Dorsolateral prefrontal cortex (tissue), 120 donors: ENCODE measurements at regions of chr14 and their contacts with region 1.

Region 1: DNA sequence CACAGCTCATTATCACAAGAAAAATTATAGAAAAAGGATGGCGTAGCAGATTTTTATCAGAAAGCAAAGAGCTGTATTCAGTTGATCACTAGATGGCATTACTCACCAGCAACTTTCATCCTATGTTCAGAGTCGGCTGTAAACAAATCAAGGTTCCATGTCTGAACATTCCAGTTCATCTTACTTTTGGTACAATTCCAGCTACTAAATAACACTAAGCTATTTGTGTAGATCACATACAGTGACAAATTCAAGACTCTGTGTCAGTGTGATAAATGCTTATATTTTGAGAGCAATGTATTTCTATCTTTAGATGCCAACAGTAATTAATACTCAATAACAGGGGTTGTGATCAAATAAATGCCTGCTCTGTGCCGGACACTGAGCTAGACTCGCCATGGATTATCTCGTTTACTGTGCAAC is 30.1 kb downstream of the NRDE2 start:
- DNase-seq: no peak
- H3K4me3 ChIP-seq: peak overlapping the region in 13 of 59 donors; percentile 0 to 33 (median 11)
- H3K27ac ChIP-seq: peak overlapping the region; percentile 38 to 99 (median 92)
- H3K27me3 ChIP-seq: no peaks in the 10 kb centered on the region
- CTCF ChIP-seq: peak in 54 of 56 donors; percentile 55 to 88 (median 77)

Region 2: DNA sequence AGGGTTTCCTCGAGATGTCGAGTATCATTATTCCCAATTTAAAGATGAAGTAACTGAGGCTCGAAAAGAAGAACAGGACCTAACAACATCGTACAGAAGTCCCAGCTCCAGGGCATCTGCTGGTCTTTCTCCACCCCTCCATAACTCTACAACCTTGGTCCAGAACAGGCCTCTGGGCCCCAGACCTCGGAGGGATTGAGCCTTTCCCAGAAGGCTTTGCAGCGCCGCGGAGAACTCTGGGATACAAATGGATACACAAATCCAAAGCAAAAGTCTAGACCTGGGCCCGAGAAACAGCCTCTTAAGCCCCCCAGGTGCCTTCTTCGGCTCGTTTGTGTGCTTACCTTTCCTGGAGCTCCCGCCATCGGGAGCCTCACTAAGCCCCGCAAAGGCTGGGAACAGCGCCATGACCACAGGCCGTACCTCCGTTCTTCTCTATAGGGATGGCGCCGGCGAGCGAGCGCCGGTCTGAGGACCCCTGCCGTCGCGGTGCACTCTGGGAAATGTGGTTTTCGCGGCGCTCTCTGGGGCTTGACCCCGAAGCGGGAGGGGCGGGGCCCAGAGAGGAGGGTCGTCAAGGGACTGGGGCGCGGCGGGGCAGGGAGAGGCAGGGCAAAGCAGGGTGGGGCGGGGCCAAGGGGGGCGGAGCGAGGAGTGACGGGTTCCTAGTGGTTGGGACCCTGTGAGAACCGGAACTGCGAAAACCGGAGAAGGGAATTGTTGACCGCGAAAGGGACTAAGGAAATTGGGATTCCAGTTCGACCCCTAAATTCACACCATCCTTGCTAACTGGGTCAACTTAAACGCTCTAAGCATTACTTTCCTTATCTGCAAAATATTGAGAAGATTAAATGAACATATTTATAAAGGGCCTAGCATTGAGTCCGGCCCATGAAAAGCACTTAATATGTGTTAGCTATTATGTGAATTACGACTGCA is 30.1 kb after region 1 on chr14 and contains the start of gene NRDE2:
- intact Hi-C with region 1: loop called in 1 of 2 experiments (anchors 1 kb)
- DNase-seq: peak; percentile 97 to 99 (median 97)
- H3K4me3 ChIP-seq: peak within 1 kb of the TSS; percentile 61 to 99 (median 80)
- H3K27ac ChIP-seq: peak within 1 kb of the TSS; percentile 76 to 97 (median 91)
- H3K27me3 ChIP-seq: no peaks in the 10 kb centered on the region
- CTCF ChIP-seq: peak in 38 of 56 donors; percentile 6 to 58 (median 32)
- total RNA-seq, gene NRDE2: 16.4 to 42.6 (median 27.7) TPM

Region 3: GRCh38 chr14:90383075-90383730 is 81.5 kb after region 1 on chr14:
- intact Hi-C with region 1: loop called (anchors 1 to 5 kb)
- DNase-seq: peak; percentile 99 to 100 (median 100)
- H3K4me3 ChIP-seq: peak overlapping the region; percentile 48 to 85 (median 71)
- H3K27ac ChIP-seq: peak overlapping the region; percentile 98 to 100 (median 100)
- H3K27me3 ChIP-seq: no peaks in the 10 kb centered on the region
- CTCF ChIP-seq: peak in 53 of 56 donors; percentile 2 to 64 (median 37)

Region 4: GRCh38 chr14:90518941-90519256 is 217.2 kb after region 1 on chr14:
- intact Hi-C with region 1: loop called in 1 of 2 experiments (anchors 10 kb)
- DNase-seq: peak in 2 of 10 donors; percentile 41 to 45
- H3K4me3 ChIP-seq: no peak overlapping the region
- H3K27ac ChIP-seq: peak overlapping the region in 42 of 59 donors; percentile 18 to 100 (median 77)
- H3K27me3 ChIP-seq: no peaks in the 10 kb centered on the region
- CTCF ChIP-seq: peak in 50 of 56 donors; percentile 8 to 67 (median 41)

Region 5: DNA sequence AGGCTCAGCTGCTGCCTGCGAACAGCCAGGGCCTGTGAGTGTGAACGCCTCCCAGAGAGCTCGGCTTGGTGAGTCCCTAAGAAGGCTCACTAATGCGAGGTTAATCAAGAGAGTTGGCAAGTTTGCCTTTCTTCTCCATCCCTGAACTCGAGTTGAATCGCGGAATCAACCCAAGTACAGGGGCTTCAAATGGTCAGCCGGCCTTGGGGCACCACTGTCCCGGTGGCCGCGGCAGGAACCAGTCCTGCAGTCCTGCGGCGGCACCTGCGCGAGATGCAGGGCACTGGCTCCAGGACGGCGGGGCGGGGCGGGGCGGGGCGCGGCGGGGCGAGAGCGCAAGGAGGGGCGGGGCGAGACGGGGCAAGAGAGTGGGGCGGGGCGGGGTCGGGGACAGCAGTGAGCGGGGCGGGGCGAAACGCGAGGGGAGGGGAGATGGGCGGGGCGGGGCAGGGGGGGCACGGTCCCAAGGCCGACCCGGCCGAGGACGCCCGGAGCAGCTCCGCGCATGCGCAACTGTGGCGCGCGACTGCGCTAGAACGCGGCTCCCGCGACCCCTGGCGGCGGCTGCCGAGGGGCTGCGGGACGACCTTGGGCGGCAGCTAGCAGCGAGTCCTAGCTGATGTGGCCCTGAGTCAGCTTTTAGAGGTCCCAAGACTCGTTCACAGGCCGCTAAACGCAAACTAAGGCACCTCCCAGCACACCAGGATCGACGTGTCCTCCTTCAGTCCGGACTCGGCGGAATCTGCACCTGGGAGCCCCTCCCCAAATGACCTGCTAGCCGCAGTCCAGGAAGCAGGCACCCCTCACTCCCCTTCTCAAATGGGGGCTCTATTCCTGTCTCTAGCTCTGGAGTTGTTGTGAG is 456.6 kb after region 1 on chr14:
- intact Hi-C with region 1: loop called (anchors 5 to 10 kb)
- DNase-seq: peak; percentile 66 to 93 (median 80)
- H3K4me3 ChIP-seq: peak overlapping the region; percentile 39 to 80 (median 64)
- H3K27ac ChIP-seq: peak overlapping the region; percentile 87 to 100 (median 98)
- H3K27me3 ChIP-seq: no peaks in the 10 kb centered on the region
- CTCF ChIP-seq: peak; percentile 80 to 99 (median 96)

Region 6: DNA sequence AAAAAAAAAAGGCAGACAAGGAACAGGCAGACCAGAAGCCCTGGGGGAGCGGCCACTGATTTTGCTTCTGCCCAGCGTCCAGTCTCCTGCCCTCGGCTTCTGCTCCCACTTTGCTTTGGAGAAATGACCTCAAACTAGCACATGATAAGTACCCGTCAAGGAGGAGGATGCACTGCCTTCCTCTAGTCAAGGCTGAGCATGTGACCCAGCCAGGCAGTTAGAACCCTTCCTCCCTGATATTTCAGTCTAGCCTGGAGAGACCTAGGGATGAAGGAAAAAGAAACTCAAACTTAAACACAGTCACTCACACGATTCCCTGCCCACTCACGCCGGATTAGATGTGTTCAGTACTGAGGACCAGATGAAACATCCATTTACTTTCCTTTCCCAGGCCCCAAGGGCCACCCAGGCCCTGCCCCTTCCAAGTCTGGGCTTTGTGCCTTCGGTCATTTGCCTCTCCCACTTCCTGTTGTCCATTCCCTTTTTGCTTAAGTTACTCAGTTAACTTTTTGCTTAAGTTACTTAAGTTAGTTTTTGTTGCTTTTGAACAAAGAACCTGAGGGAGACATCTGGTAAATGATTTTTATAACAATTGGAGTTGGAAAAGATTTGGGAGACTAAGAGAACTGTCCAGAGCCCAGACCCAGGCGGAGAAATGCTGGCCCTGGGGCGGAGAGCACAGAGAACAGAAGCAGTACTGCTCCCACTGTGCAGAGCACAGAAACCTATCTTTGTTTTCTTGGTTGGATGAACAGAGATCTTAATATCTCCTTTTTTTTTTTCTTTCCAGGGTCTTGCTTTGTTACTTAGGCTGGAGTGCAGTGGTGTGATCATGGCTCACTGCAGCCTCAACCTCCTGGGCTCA is 537.6 kb after region 1 on chr14:
- intact Hi-C with region 1: no loop called
- DNase-seq: no peak
- H3K4me3 ChIP-seq: no peak overlapping the region
- H3K27ac ChIP-seq: peak overlapping the region in 25 of 59 donors; percentile 8 to 68 (median 38)
- H3K27me3 ChIP-seq: no peaks in the 10 kb centered on the region
- CTCF ChIP-seq: no peak

Region 7: DNA sequence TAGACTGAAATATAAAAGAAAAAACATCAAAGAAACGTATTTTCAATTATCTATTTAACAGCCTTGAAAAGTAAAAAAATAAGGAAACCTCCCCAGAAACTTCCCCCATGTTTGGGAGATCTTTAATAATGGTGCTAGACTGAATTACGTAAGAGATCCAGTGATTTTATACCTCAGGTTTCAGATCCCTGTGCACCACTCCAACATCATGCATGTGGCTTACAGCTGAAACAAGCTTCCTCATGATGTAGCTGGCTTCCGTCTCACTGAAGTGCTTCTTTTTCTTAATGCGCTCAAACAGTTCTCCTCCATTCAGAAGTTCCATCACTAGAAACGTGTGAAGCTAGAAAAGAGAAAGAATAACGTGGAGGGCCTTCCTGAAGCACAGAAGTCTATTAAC is 592.6 kb after region 1 on chr14:
- intact Hi-C with region 1: loop called in 1 of 2 experiments (anchors 5 kb)
- DNase-seq: peak in 1 of 10 donors; percentile 19
- H3K4me3 ChIP-seq: no peak overlapping the region
- H3K27ac ChIP-seq: peak overlapping the region in 29 of 59 donors; percentile 3 to 67 (median 37)
- H3K27me3 ChIP-seq: no peaks in the 10 kb centered on the region
- CTCF ChIP-seq: no peak